Sigmoid colon (tissue), 7 donors: ENCODE measurements at regions of chr2 and their contacts with region 1.

Region 1: DNA sequence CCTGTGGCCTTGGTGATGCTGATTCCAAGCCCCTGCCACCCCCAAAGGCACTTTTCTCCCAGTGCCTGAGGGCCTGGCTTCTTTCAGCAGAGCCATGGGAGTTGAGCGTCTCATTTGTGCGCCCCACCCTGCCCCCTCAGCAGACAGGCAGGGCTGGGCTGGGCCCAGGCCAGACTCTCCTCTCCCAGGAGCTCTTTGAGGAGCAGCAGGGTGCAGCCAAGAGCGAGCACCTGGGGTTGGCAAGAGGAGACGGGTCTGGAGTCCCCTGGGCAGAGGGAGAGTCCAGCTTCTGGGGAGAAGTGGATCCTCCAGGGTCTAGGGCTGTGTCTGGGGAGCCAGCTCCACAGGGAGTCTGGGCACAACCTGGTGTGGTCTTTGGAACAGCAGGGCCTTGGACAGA is 21.2 kb downstream of the NPPC start:
- DNase-seq: peak; percentile 15
- H3K4me3 ChIP-seq: no peak overlapping the region
- H3K27ac ChIP-seq: no peak overlapping the region
- H3K4me1 ChIP-seq: peaks cover 0 to 2% (median 0%) of the 10 kb centered on the region in 4 donors
- H3K27me3 ChIP-seq: peaks cover 0 to 7% (median 0%) of the 10 kb centered on the region in 3 donors
- CTCF ChIP-seq: no peak
- EP300 ChIP-seq: no peak
- POLR2A ChIP-seq: no peak

Region 2: DNA sequence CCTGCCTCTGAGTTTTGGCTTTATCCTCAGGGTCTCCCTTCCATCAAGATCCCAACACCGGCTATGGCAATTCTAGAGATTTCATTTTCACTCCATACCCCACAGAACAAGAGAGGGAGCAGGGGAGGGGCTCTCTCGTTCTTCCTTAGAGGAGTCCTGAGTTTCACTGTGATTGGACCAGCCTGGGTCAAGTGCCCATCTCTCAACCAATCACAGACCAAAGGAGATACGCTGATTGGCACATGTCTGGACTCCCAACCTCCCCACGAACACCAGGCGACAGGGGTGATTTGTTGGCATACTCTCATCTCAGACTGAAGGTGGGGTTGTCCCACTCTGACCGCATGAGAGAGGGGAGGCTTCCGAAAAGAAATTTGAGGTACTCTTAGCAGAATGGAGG is 43.5 kb before region 1 on chr2:
- intact Hi-C with region 1: no loop called
- DNase-seq: no peak
- H3K4me3 ChIP-seq: no peak overlapping the region
- H3K27ac ChIP-seq: no peak overlapping the region
- H3K4me1 ChIP-seq: no peaks in the 10 kb centered on the region
- H3K27me3 ChIP-seq: peaks cover 0 to 4% (median 0%) of the 10 kb centered on the region in 3 donors
- CTCF ChIP-seq: no peak
- EP300 ChIP-seq: no peak
- POLR2A ChIP-seq: no peak

Region 3: GRCh38 chr2:232438951-232439757 is 534.1 kb after region 1 on chr2:
- intact Hi-C with region 1: loop called (anchors 5 kb)
- DNase-seq: no peak
- H3K4me3 ChIP-seq: no peak overlapping the region
- H3K27ac ChIP-seq: no peak overlapping the region
- H3K4me1 ChIP-seq: peaks cover 0 to 3% (median 0%) of the 10 kb centered on the region in 4 donors
- H3K27me3 ChIP-seq: no peaks in the 10 kb centered on the region
- CTCF ChIP-seq: peak in 3 of 4 experiments; percentile 20 to 68 (median 44)
- EP300 ChIP-seq: no peak
- POLR2A ChIP-seq: no peak

Region 4: GRCh38 chr2:232521959-232522622 is 617.1 kb after region 1 on chr2:
- intact Hi-C with region 1: loop called (anchors 5 kb)
- DNase-seq: no peak
- H3K4me3 ChIP-seq: peak overlapping the region in 3 of 4 donors; percentile 2 to 39 (median 38)
- H3K27ac ChIP-seq: no peak overlapping the region
- H3K4me1 ChIP-seq: peaks cover 0 to 31% (median 29%) of the 10 kb centered on the region in 4 donors
- H3K27me3 ChIP-seq: peaks cover 30 to 74% (median 51%) of the 10 kb centered on the region in 3 donors
- CTCF ChIP-seq: peak in 3 of 4 experiments; percentile 26 to 95 (median 31)
- EP300 ChIP-seq: no peak
- POLR2A ChIP-seq: no peak